Activated CD4-positive, alpha-beta T cell treated with anti-CD3 and anti-CD28 coated beads, Interleukin-2, amount 10 ng/mL, durations not matched to agents 7 days and 5 days (primary cell): ENCODE measurements at regions of chr19 and their contacts with region 1.

Region 1: DNA sequence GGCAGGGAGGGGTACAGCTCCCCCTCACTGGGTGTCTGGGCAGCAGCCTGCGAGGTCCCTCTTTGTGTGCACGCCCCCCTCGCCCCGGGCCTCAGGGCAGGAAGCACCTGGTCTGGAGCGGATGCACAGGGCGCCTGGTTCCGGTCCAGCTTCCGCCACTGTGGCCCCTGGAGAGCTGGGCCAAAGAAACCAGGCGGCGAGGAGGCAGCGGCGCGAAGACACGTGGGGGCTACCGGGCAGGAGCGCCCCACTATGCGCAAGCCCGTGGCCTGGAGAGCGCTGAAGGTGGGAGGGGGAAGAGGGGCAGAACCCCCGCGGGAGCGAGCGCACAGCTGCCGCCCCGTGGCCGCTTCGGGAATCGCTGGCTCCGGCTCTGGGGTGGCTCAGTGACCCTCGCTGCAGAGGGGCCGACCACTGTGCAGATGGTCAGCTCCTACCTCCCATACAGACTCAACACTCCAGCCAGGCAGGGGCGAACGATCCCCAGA is 1.7 kb upstream of the LYL1 start:
- DNase-seq: peak; percentile 62
- H3K4me3 Mint-ChIP-seq: peak overlapping the region; percentile 82
- H3K27ac Mint-ChIP-seq: peak overlapping the region; percentile 92
- H3K4me1 Mint-ChIP-seq: peaks cover 38% of the 10 kb centered on the region
- H3K27me3 Mint-ChIP-seq: peaks cover 6% of the 10 kb centered on the region

Region 2: GRCh38 chr19:12868540-12869098 is 235.8 kb before region 1 on chr19:
- CTCF ChIA-PET with region 1: no interaction called
- POLR2A ChIA-PET with region 1: no interaction called
- DNase-seq: no peak
- H3K4me3 Mint-ChIP-seq: no peak overlapping the region
- H3K27ac Mint-ChIP-seq: no peak overlapping the region
- H3K4me1 Mint-ChIP-seq: peaks cover 20% of the 10 kb centered on the region
- H3K27me3 Mint-ChIP-seq: peaks cover 2% of the 10 kb centered on the region

Region 3: GRCh38 chr19:12974301-12975220 is 129.8 kb before region 1 on chr19:
- CTCF ChIA-PET with region 1: interaction called, 15 read pairs
- POLR2A ChIA-PET with region 1: no interaction called
- DNase-seq: no peak
- H3K4me3 Mint-ChIP-seq: no peak overlapping the region
- H3K27ac Mint-ChIP-seq: peak overlapping the region; percentile 25
- H3K4me1 Mint-ChIP-seq: no peaks in the 10 kb centered on the region
- H3K27me3 Mint-ChIP-seq: peaks cover 7% of the 10 kb centered on the region

Region 4: GRCh38 chr19:13093407-13094105 is 10.8 kb before region 1 on chr19:
- CTCF ChIA-PET with region 1: interaction called, 23 read pairs
- POLR2A ChIA-PET with region 1: no interaction called
- DNase-seq: peak; percentile 84
- H3K4me3 Mint-ChIP-seq: no peak overlapping the region
- H3K27ac Mint-ChIP-seq: no peak overlapping the region
- H3K4me1 Mint-ChIP-seq: peaks cover 23% of the 10 kb centered on the region
- H3K27me3 Mint-ChIP-seq: peaks cover 38% of the 10 kb centered on the region

Region 5: GRCh38 chr19:13117772-13118423 is 13.5 kb after region 1 on chr19 and contains the start of gene NACC1:
- CTCF ChIA-PET with region 1: interaction called, 22 read pairs
- POLR2A ChIA-PET with region 1: no interaction called
- DNase-seq: peak; percentile 87
- H3K4me3 Mint-ChIP-seq: peak within 1 kb of the TSS; percentile 93
- H3K27ac Mint-ChIP-seq: peak within 1 kb of the TSS; percentile 95
- H3K4me1 Mint-ChIP-seq: peaks cover 48% of the 10 kb centered on the region
- H3K27me3 Mint-ChIP-seq: no peaks in the 10 kb centered on the region
- total RNA-seq, gene NACC1: 57.8 to 63.8 TPM

Region 6: DNA sequence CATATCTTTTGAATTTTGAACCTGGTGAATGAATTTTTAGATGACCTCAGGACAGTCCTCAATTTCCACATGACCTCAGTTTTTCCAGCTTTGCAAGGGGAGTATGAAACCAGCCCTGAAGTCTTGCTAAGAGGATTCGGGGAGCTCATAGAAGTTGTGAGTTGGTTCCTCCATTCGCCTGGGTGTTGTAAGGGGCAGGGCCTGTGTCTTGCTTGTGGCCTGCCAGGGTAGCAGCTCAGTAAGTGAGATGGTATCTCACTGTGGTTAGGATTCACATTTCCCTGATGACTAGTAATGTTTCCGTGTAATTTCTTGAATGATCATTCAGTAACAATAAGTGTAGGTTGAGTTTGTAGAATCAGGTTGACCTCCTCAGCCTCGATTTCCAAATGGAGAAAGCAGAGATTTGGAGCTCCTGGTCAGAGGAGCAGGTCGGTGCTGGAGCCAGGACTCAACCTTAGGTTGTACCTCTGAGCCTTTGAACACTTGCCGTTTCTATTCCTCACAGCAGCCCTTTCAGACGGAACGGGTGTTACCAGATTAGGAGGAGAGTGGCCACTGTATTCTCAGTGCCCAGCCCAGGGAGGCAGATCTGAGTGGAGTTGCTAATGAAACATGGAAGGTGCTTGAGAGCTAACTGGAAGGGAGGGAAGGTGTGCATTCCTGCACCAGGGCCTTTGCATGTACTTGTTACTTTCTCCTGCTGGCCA is 28.2 kb after region 1 on chr19:
- CTCF ChIA-PET with region 1: interaction called, 10 read pairs
- POLR2A ChIA-PET with region 1: interaction called, 5 read pairs
- DNase-seq: peak; percentile 66
- H3K4me3 Mint-ChIP-seq: peak overlapping the region; percentile 30
- H3K27ac Mint-ChIP-seq: peak overlapping the region; percentile 84
- H3K4me1 Mint-ChIP-seq: peaks cover 33% of the 10 kb centered on the region
- H3K27me3 Mint-ChIP-seq: no peaks in the 10 kb centered on the region